HEK293T (cell line): ENCODE measurements at regions of chr1 and their contacts with region 1.

Region 1: DNA sequence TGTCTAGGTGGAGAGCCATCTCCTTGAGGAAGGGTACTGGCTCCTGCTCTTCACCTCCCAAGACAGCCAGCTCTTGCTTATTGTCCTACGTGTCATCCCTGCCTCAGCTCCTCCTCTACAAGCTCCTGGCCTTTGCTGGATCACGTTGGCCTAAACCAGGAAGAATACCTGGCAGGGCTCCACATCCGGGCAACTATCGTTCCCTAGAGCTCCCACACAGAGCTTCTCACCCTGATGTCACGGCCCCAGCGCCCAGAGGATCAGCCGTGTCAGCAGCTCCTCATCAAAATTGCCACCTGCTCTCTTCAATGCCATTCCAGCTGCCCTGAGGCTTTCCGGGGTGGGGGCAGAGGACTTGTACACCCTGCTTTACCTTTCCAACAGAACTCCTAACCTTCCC is 1.9 kb upstream of the TPM3 start:
- DNase-seq: no peak

Region 2: DNA sequence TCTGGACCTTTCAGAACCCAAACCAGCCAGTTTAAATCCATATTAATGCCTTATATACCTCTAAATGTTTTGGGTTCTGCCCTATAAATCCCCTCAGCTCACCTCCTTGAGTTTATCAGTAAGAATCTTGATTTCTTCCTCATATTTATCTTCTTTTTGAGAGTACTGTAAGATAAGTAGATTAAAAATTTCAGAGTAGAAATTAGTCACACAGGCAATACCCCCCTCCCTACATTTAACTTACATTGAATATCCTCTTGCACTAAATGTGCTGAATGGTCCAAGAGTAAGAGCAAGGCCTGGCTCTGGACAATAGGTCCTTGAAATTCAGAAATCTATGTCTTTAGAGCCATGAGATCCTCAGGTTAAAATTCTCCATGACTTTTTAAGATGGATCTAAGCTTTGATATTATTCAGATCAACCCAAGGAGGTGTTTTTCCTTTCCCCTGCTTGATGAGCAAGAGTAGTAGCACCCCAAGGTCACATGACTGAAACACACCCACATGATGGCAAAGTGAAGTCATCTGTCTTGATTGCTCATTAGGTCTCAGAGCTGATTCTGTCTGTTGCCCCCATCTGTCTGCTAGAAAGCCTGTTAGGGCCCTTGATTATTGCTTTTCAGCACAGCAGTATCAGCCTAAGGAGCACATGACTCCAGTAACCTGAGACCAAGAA is 23.1 kb before region 1 on chr1:
- CTCF ChIA-PET with region 1: no interaction called
- POLR2A ChIA-PET with region 1: no interaction called
- DNase-seq: no peak

Region 3: GRCh38 chr1:154272217-154272998 is 78.6 kb after region 1 on chr1 and contains the start of gene HAX1:
- CTCF ChIA-PET with region 1: interaction called, 16 read pairs
- POLR2A ChIA-PET with region 1: interaction called, 3 read pairs
- DNase-seq: peak; percentile 94